Activated naive CD8-positive, alpha-beta T cell treated with anti-CD3 and anti-CD28 coated beads, Interleukin-2, amount 10 ng/mL, durations not matched to agents 7 days and 5 days (primary cell): ENCODE measurements at regions of chr9 and their contacts with region 1.

Region 1: DNA sequence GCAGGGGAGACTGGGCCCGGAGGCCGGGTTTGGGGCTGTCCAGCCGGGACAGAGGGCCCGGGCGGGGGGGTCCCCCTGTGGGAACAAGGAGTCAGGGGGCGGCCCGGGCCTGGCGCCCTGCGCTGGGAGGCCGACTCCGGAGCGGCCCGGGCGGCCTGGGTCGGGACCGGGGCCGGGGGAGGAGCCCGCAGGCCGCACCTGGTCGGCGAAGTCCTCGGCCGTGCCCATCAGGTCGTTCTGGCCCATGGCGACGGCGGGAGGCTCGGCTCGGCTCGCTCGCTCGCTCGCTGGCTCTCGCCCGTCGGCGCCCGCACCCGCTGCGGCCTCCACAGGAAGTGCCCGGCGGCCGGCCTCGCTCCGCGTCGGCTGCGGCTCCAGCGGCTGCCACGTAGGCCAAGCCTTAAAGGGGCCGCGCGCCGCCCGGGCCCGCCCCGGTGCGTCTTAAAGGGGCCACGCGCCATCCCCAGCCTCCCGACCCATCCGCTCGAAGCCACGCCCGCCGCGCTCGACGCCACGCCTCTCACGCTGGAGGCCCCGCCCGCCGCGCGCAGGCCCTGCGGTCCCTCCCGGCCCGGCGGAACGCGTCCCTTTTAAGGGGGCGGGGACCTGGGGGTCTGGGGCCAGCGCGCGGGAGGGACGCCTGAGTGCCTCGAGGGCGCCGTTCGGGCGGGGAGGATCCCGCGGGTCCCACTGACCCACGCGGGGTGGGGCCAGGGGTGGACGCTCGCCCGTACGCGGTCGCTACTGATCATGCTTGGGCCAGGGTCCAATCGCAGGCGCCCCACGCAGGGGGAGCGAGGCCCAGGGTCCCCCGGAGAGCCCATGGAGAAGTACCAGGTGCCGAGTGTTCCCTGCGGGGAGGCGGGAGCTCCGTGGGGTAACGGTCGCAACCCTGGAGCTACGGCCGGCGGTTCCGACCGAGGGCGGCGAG is at the starts of genes STKLD1 and SURF4:
- DNase-seq: peak; percentile 99
- ATAC-seq: peak; percentile 78
- H3K4me3 Mint-ChIP-seq: peak within 1 kb of the TSS; percentile 95
- H3K27ac Mint-ChIP-seq: peak within 1 kb of the TSS; percentile 99
- H3K4me1 Mint-ChIP-seq: peaks cover 41% of the 10 kb centered on the region
- H3K27me3 Mint-ChIP-seq: peaks cover 3% of the 10 kb centered on the region
- total RNA-seq, gene STKLD1: 0.17 to 0.91 TPM
- total RNA-seq, gene SURF4: 160 to 161 TPM

Region 2: DNA sequence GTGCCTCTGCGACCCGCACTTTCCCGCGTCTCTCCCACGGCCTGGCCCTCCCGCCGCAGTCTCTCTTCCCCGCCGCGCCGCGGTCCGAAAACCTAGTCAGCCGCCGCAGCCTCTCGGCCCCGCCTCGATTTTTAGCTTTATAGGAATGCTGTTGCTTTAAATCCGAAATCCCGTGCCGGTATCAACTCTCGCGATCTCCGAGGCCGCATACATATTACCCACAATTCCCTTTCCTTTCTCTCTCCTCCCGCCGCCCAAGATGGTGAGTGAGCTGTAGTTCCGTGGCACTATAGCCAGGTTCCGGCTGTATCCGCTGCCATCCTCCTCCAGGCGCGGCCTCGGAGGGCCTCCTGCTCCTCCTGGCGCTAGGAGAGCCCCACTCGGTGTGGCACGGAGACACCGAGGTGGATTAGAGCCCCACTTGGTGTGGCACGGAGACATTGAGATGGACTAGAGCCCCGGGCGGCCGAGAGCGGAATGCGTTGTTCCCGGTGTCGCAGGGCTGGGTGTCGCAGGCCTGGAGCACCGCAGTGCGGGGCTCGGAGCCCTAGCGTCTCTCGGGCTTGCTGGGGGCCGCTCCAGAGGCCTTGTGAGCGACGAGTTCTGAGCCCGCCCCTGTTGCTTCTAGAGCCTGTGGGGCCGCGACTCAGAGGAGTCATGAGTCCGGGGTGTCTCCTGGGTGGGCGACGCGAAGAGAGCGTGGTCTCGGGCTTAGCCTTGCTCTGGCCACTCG is 27.8 kb before region 1 on chr9 and contains the starts of genes MED22 and RPL7A:
- POLR2A ChIA-PET with region 1: interaction called, 162 read pairs
- DNase-seq: peak; percentile 87
- ATAC-seq: peak; percentile 78
- H3K4me3 Mint-ChIP-seq: peak within 1 kb of the TSS; percentile 100
- H3K27ac Mint-ChIP-seq: peak within 1 kb of the TSS; percentile 99
- H3K4me1 Mint-ChIP-seq: peaks cover 30% of the 10 kb centered on the region
- H3K27me3 Mint-ChIP-seq: no peaks in the 10 kb centered on the region
- total RNA-seq, gene MED22: 27.8 to 35.5 TPM
- total RNA-seq, gene RPL7A: 1,843 to 1,855 TPM

Region 3: DNA sequence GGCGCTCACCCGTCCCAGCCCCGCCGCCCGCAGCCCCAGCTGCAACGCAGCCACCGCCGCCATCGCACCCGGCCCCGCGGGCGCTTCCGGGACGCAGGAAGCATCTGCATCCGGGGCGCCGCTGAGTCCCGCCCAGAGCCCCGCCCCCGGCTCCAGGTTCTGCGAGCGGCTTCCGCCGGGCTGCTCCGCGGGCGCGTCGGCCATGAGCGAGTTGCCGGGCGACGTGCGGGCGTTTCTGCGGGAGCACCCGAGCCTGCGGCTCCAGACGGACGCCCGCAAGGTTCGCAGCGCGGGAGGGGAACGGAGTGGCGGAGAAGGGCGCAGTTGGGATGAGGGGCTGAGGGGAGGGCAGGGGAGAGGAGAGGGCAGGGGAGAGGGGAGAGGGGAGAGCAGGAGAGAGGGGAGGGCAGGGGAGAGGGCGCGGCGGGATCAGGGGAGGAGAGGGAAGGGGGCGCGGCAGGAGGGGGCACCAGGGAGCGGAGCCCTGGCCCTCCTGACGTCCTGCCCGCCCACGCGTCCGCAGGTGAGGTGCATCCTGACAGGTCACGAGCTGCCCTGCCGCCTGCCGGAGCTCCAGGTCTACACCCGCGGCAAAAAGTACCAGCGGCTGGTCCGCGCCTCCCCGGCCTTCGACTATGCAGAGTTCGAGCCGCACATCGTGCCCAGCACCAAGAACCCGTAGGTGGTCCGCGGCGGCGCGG is 19.4 kb before region 1 on chr9 and contains the starts of genes SURF1 and SURF2:
- POLR2A ChIA-PET with region 1: interaction called, 162 read pairs
- DNase-seq: peak; percentile 95
- ATAC-seq: peak; percentile 89
- H3K4me3 Mint-ChIP-seq: peak within 1 kb of the TSS; percentile 93
- H3K27ac Mint-ChIP-seq: peak within 1 kb of the TSS; percentile 86
- H3K4me1 Mint-ChIP-seq: peaks cover 27% of the 10 kb centered on the region
- H3K27me3 Mint-ChIP-seq: no peaks in the 10 kb centered on the region
- total RNA-seq, gene SURF1: 40.6 to 41.9 TPM
- total RNA-seq, gene SURF2: 16.2 to 17.0 TPM

Region 4: DNA sequence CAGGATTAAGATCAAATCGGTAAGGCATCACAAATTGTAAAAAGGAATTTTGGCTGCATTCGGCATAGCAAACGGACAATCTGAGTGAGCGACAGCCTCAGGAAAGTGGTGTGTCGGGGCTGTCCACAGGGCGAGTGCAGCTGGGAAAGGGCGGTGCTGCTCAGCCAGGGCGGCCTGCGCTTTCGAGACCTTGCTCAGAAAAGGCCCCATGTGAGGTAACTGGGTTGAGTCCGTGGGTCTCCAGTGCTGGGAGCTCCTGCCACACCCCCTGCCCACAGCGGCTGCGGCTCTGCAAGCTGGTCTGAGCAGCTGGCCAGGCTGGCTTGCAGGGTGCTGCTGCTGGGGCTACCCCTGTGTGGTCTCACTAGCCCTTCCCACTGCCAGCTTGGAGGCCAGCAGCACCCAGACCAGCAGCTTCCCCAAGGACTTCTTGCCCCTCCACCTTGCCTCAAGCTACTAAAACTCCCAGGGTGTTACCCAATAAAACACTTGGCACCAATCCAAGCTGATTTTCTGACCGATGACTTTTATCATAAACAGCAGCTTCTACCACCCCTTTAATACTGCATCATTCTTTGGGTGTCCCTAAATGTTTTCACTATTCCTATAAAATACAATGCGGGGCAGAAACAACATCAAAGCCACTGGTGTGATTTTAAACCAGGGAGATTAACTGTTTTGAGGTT is 13.5 kb before region 1 on chr9:
- POLR2A ChIA-PET with region 1: interaction called, 162 read pairs
- DNase-seq: no peak
- ATAC-seq: no peak
- H3K4me3 Mint-ChIP-seq: no peak overlapping the region
- H3K27ac Mint-ChIP-seq: no peak overlapping the region
- H3K4me1 Mint-ChIP-seq: peaks cover 28% of the 10 kb centered on the region
- H3K27me3 Mint-ChIP-seq: no peaks in the 10 kb centered on the region